PC-9 (cell line): ENCODE measurements at regions of chr17 and their contacts with region 1.

Region 1: GRCh38 chr17:1365445-1366039 is 34.5 kb downstream of the YWHAE start:
- DNase-seq: peak; percentile 56 to 74
- H3K4me3 ChIP-seq: no peak overlapping the region
- H3K27ac ChIP-seq: peak overlapping the region; percentile 47; the same call in 1 of the 2 replicates
- H3K4me1 ChIP-seq: peaks cover 40% of the 10 kb centered on the region
- H3K27me3 ChIP-seq: no peaks in the 10 kb centered on the region
- CTCF ChIP-seq: peak; percentile 97

Region 2: GRCh38 chr17:1260086-1260769 is 105.3 kb before region 1 on chr17:
- CTCF ChIA-PET with region 1: interaction called, 18 read pairs
- POLR2A ChIA-PET with region 1: no interaction called
- intact Hi-C with region 1: no loop called
- DNase-seq: no peak
- H3K4me3 ChIP-seq: peak overlapping the region; percentile 58; the same call in 1 of the 2 replicates
- H3K27ac ChIP-seq: no peak overlapping the region
- H3K4me1 ChIP-seq: peaks cover 10% of the 10 kb centered on the region; the same call in 1 of the 2 replicates
- H3K27me3 ChIP-seq: peaks cover 5% of the 10 kb centered on the region; the same call in 1 of the 2 replicates
- CTCF ChIP-seq: no peak

Region 3: DNA sequence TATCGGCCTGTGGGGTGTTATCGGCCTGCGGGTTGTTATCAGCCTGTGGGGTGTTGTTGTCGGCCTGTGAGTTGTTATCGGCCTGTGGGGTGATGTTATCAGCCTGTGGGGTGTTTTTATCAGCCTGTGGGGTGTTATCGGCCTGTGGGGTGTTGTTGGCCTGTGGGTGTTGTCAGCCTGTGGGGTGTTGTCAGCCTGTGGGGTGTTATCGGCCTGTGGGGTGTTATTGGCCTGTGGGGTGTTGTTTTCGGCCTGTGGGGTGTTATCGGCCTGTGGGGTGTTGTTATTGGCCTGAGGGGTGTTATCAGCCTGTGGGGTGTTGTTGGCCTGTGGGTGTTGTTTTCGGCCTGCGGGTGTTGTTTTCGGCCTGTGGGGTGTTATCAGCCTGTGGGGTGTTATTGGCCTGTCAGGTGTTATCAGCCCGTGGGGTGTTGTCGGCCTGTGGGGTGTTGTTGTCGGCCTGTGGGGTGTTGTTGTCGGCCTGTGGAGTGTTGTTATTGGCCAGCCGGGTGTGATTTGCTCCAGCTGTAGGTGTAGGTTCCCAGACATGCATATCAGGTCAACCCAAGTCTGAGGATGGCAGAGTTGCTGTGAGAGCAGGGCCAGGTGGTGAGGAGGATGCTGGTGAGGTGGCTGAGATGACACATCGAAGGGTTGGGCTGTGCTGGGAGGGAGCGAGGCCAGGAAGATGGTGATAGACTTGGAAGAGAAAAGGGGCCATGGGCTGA is 79.0 kb before region 1 on chr17:
- CTCF ChIA-PET with region 1: no interaction called
- POLR2A ChIA-PET with region 1: no interaction called
- intact Hi-C with region 1: no loop called
- DNase-seq: no peak
- H3K4me3 ChIP-seq: no peak overlapping the region
- H3K27ac ChIP-seq: no peak overlapping the region
- H3K4me1 ChIP-seq: no peaks in the 10 kb centered on the region
- H3K27me3 ChIP-seq: peaks cover 15% of the 10 kb centered on the region
- CTCF ChIP-seq: no peak

Region 4: DNA sequence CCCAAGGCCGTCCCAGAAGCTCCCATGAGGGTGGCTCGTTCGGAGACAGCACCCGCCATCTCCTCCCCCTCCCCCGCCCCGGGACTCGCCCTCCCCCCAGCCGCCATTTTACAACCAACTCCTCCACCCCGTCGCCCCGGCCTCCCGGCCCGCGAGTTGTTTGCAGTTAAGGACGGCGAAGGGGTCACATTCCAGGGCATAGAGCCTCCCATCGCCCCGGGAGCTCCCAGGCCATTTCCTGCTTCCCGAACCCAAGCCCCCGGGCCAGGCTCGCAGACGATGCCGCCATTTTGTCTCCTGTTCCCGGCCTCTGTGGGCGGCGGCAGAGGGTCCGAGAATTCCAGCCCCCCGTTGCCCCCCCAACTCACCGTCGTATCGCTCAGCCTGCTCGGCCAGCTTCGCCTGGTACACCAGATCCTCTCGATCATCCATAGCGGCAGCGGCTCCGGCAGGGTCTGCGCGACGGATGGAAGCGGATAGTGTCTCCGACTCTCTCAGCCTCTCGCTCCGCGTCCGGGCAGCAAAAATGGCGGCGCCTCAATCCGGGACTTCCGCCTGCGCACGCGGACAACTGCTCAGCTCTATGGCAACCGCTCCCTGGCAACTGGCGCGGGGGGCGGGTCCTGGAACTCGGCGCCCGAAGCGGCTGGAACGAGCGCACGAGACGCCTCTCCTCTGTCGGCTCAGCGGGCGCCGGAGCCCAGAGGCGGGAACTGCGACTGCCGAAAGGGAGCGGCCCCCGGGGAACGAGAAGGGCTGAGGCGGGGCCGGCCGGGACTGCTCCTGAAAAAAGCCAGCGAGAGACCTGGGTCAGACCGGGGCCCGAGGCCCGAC is 34.4 kb after region 1 on chr17 and contains the start of gene YWHAE:
- CTCF ChIA-PET with region 1: interaction called, 4 read pairs
- POLR2A ChIA-PET with region 1: interaction called, 11 read pairs
- intact Hi-C with region 1: no loop called
- DNase-seq: peak; percentile 91 to 99
- H3K4me3 ChIP-seq: peak within 1 kb of the TSS; percentile 96
- H3K27ac ChIP-seq: peak within 1 kb of the TSS; percentile 96
- H3K4me1 ChIP-seq: peaks cover 35% of the 10 kb centered on the region
- H3K27me3 ChIP-seq: no peaks in the 10 kb centered on the region
- CTCF ChIP-seq: no peak
- total RNA-seq, gene YWHAE: 841 and 1,140 TPM in 2 replicates

Region 5: DNA sequence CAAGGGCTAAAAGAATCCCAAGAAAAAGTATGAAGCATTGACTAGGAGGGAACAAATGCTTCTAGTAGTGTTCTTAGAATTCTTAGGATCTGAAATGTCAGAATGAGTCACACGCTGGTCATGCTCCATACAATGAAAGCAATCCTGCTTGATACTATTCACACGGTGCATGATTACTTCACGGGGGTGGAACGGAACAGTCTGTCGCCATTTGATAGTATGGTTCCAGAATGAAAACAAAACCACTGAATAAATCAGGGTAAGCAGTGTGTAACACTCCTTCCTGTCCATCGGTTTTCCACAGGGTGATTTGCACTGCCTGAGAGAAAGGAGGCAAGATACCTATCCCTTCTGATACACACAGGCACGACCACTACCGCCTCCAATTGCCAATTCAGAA is 57.4 kb after region 1 on chr17:
- CTCF ChIA-PET with region 1: interaction called, 3 read pairs
- POLR2A ChIA-PET with region 1: no interaction called
- intact Hi-C with region 1: loop called (anchors 2 kb)
- DNase-seq: peak; percentile 64 to 72
- H3K4me3 ChIP-seq: no peak overlapping the region
- H3K27ac ChIP-seq: peak overlapping the region; percentile 58
- H3K4me1 ChIP-seq: peaks cover 10% of the 10 kb centered on the region
- H3K27me3 ChIP-seq: no peaks in the 10 kb centered on the region
- CTCF ChIP-seq: no peak

Region 6: DNA sequence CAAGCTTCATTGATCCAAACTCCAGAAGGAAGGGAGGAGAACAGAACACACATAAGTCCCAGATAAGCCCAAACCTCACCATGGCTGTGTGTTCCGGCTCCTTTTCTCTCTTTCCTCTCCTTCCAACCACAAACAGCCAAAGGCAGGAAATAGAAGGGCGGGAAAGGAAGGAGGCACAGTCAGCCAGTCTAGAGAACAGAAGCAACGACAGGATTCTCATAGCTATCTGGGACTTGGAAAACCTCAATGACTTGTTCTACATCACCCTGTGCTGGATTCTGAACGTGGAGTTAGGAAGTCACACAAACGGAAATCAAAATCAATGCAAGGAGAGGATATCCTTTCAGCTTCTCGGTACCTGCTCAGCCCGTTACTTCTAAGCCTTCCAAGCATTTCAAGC is 81.5 kb after region 1 on chr17:
- CTCF ChIA-PET with region 1: no interaction called
- POLR2A ChIA-PET with region 1: no interaction called
- intact Hi-C with region 1: no loop called
- DNase-seq: no peak
- H3K4me3 ChIP-seq: no peak overlapping the region
- H3K27ac ChIP-seq: 0 out of 2 replicates have a peak overlapping the region, but pooled peaks have one; percentile 21
- H3K4me1 ChIP-seq: no peaks in the 10 kb centered on the region
- H3K27me3 ChIP-seq: no peaks in the 10 kb centered on the region
- CTCF ChIP-seq: no peak

Region 7: GRCh38 chr17:1488030-1488863 is 122.7 kb after region 1 on chr17:
- CTCF ChIA-PET with region 1: interaction called, 4 read pairs
- POLR2A ChIA-PET with region 1: interaction called, 3 read pairs
- intact Hi-C with region 1: loop called (anchors 1 kb)
- DNase-seq: peak; percentile 60 to 97
- H3K4me3 ChIP-seq: peak overlapping the region; percentile 56
- H3K27ac ChIP-seq: peak overlapping the region; percentile 45
- H3K4me1 ChIP-seq: peaks cover 58% of the 10 kb centered on the region
- H3K27me3 ChIP-seq: no peaks in the 10 kb centered on the region
- CTCF ChIP-seq: no peak

Region 8: GRCh38 chr17:1648963-1649843 is 283.7 kb after region 1 on chr17:
- CTCF ChIA-PET with region 1: interaction called, 3 read pairs
- POLR2A ChIA-PET with region 1: interaction called, 7 read pairs
- intact Hi-C with region 1: loop called (anchors 10 kb)
- DNase-seq: peak; percentile 79 to 98
- H3K4me3 ChIP-seq: peak overlapping the region; percentile 79
- H3K27ac ChIP-seq: peak overlapping the region; percentile 75
- H3K4me1 ChIP-seq: peaks cover 31% of the 10 kb centered on the region
- H3K27me3 ChIP-seq: no peaks in the 10 kb centered on the region
- CTCF ChIP-seq: no peak; the same call in none of the 2 replicates